GM13976 (cell line): ENCODE measurements at regions of chr1 and their contacts with region 1.

Region 1: DNA sequence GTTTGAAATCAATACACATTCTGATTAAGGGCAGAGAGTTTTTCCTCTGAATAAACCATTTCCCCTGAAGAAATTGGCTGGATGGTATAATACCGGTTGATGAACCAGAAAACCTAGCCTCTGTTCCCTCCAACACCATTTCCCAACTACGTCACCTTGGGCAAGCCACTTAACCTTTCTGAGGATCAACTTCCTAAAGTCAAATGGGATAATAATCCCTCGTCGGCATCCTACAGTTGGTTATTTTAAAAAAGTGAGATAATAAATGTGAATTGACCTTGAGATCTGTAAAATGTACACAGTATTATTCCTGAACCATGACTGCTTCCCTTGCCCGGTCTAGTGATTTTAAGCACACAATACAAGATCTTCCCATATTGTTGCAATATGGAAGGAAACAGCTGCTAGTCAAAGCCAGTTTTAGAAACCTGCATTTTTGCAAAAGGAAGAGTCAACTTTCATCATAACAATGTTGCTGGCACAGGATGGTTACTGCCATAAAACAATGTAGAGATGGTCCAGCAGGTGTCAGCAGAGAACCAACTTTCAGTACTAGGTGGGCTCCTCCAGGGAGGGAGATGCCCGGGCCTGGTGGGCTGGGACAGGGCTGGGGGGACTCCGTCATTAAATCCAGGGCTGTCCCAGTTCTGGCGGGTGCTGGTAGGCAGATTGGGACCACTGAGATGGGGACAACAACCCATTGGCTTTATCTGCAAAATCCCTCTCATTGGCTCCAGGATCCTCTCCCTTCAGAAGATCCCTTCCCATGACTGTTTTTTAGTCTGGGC is 5.2 kb upstream of the HLX start:
- DNase-seq: peak; percentile 54
- CTCF ChIP-seq: peak; percentile 62

Region 2: DNA sequence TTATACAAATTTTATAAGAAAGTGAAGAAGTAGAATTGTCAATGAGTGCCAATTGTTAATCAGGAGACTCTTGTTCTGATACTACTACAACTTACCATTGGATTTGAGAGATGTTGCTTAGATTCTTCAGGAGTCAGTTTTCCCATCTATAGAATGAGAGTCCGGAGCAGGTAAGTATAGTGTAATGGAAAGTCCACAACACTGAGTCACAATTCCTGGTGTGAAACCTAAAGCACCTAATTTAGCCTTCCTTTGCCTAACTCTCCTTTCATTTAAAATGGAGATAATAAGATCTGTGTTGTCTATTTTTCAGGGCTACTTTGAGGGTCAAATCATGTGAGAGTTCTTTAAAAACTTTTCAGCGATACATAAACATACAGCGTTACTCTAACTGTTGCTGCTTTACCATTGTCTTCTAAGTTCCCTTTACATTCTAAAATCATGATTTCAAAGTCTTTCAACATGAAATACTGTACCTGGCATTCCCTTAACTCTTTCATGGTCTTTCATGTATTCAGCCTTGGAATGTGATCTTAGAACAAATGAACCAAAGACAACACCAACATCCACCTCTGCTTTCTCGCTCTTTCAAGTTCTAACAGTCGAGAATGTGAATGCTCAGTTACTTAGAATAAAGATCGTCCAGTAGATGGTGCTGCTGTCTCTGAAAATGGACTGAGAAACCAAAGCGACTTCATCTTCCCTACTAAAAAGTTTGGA is 1036.6 kb before region 1 on chr1:
- in situ Hi-C with region 1: no loop called
- DNase-seq: peak; percentile 47
- CTCF ChIP-seq: peak; percentile 28

Region 3: DNA sequence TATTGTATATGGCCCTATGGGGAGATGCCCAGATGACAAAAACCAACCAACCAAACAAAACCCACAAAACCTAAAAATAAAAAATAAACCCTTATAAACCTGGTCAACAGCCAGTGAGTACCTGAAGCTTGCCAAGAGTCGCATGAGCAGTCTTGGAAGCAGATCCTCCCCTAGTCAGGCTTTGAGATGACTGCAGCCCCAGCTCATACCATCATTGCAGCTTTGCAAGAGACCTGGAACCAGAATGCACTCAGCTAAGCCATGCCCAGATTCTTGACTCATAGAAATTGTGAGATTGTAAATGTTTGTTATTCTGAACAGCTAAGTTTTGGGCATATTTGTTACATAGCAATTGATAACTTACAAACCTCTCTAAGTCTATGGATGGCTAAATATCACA is 332.0 kb after region 1 on chr1:
- in situ Hi-C with region 1: loop called (anchors 5 kb)
- DNase-seq: no peak
- CTCF ChIP-seq: no peak